Pancreas (tissue), 10 donors: ENCODE measurements at regions of chr22 and their contacts with region 1.

Region 1: GRCh38 chr22:19730655-19731360 is 7.5 kb downstream of the GP1BB start:
- DNase-seq: peak; percentile 73 to 95 (median 87)
- ATAC-seq: peak; percentile 86 to 94 (median 90)
- H3K4me3 ChIP-seq: peak overlapping the region in 2 of 4 donors; percentile 12 to 35
- H3K27ac ChIP-seq: no peak overlapping the region
- H3K4me1 ChIP-seq: peaks cover 0 to 4% (median 0%) of the 10 kb centered on the region in 3 donors
- H3K27me3 ChIP-seq: no peaks in the 10 kb centered on the region
- CTCF ChIP-seq: peak; percentile 84 to 92 (median 88)

Region 2: GRCh38 chr22:19463496-19464469 is 267.0 kb before region 1 on chr22:
- intact Hi-C with region 1: no loop called
- DNase-seq: no peak
- ATAC-seq: peak in 1 of 4 donors; percentile 27
- H3K4me3 ChIP-seq: no peak overlapping the region
- H3K27ac ChIP-seq: no peak overlapping the region
- H3K4me1 ChIP-seq: no peaks in the 10 kb centered on the region
- H3K27me3 ChIP-seq: no peaks in the 10 kb centered on the region
- CTCF ChIP-seq: no peak

Region 3: GRCh38 chr22:19909350-19910179 is 178.8 kb after region 1 on chr22:
- intact Hi-C with region 1: loop called in 2 of 3 experiments (anchors 2 to 5 kb)
- DNase-seq: peak; percentile 50 to 89 (median 80)
- ATAC-seq: peak; percentile 81 to 98 (median 94)
- H3K4me3 ChIP-seq: no peak overlapping the region
- H3K27ac ChIP-seq: no peak overlapping the region
- H3K4me1 ChIP-seq: no peaks in the 10 kb centered on the region
- H3K27me3 ChIP-seq: no peaks in the 10 kb centered on the region
- CTCF ChIP-seq: peak; percentile 63 to 73 (median 72)